ENCODE measurements at regions of chr7 and their contacts with region 1.

Region 1: GRCh38 chr7:26398756-26399501 is 107.3 kb downstream of the SNX10 start:
- DNase-seq: peak; percentile 53
- ATAC-seq: peak; percentile 79
- H3K4me3 ChIP-seq: peak overlapping the region; percentile 75
- H3K27ac ChIP-seq: peak overlapping the region; percentile 20; the same call in 1 of the 2 replicates
- H3K4me1 ChIP-seq: peaks cover 11% of the 10 kb centered on the region
- H3K27me3 ChIP-seq: no peaks in the 10 kb centered on the region
- CTCF ChIP-seq: peak; percentile 43; the same call in 1 of the 2 replicates

Region 2: DNA sequence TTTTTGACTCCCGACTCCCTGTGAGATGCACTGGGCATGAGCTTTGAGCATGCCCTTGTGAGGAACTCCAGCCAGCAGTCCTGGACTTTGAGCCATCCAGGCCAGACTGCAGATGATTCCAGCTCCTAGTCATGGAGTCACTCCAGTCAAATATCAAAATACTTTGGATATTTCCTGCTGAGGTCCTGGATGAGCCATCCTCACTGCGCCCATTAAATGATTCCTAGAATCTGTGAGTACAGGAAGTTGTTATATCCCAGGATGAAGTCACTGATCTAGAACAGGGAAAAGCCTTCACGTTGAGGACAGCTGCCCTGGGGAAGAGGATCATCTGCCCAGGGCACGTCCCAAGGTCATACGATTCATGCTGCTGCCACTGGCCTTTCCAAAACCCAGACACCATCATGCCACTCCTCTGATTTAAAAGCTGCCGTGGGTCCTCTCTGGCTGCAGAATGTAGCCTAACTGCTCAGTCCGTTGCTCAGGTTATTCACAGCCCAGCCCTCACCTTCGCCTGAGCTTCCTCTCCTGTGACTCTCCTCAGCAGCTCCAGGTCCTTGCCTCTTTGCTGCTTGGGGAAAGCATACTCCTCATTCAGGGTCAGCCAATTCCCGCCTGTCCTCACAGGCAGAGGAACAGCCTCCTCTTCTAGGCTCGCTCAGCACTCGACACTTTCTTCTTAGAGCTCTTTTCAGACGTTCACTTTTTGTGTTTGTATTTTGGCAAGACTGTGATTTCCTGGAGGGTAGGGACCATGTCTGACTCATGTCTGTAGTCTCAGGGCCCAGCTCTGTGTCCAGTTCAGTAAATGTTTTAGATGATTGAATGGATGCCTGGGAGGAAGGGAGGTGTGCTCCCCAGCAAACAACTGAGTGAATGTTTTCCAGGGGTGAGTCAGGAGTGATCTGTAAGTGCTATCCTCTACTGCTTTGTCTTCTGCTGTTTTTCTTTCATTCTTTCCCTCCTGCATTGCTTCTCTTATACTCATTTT is 50.5 kb after region 1 on chr7:
- CTCF ChIA-PET with region 1: no interaction called
- POLR2A ChIA-PET with region 1: no interaction called
- intact Hi-C with region 1: loop called (anchors 2 kb)
- DNase-seq: peak; percentile 81
- ATAC-seq: peak; percentile 96
- H3K4me3 ChIP-seq: peak overlapping the region; percentile 40
- H3K27ac ChIP-seq: peak overlapping the region; percentile 72
- H3K4me1 ChIP-seq: peaks cover 33% of the 10 kb centered on the region
- H3K27me3 ChIP-seq: no peaks in the 10 kb centered on the region
- CTCF ChIP-seq: no peak

Region 3: GRCh38 chr7:26500749-26501352 is 101.9 kb after region 1 on chr7:
- CTCF ChIA-PET with region 1: no interaction called
- POLR2A ChIA-PET with region 1: no interaction called
- intact Hi-C with region 1: loop called (anchors 1 kb)
- DNase-seq: peak; percentile 58
- ATAC-seq: peak; percentile 71
- H3K4me3 ChIP-seq: no peak overlapping the region
- H3K27ac ChIP-seq: no peak overlapping the region
- H3K4me1 ChIP-seq: no peaks in the 10 kb centered on the region
- H3K27me3 ChIP-seq: no peaks in the 10 kb centered on the region
- CTCF ChIP-seq: peak; percentile 79

Region 4: DNA sequence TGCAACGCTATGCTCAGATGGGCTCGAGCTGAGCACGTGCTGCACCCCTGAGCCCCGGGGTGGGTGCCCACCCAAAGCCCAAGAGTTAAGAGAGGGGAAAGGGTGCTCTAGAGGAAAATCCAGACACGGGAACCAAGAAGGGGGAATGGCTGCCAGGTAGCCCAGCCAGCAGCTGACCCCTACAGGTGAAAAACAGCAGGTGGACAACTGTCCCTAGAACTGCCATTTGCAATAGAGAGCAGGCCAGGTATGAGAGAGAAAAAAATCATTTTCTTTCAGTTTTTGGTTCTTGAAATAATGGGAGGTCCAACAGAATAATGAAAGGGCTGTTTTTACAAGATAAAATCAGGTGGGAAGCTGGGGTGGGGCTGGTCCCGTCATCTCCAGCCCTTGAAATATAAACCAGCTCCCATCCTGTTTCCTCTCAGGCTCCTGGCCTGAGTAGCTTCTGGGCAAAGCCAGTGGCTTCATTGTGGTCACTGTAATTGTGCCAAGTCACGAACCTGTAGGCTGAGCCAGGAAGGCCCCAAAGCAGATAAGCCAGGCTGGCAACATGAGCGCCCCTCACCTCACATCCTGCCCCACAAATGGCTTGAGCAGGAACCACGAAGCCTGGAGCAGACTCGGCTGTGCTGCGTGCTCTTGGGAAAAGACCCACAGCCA is 150.5 kb after region 1 on chr7:
- CTCF ChIA-PET with region 1: interaction called, 3 read pairs
- POLR2A ChIA-PET with region 1: interaction called, 4 read pairs
- intact Hi-C with region 1: loop called (anchors 2 kb)
- DNase-seq: peak; percentile 98
- ATAC-seq: peak; percentile 89
- H3K4me3 ChIP-seq: peak overlapping the region; percentile 35
- H3K27ac ChIP-seq: peak overlapping the region; percentile 100
- H3K4me1 ChIP-seq: peaks cover 52% of the 10 kb centered on the region
- H3K27me3 ChIP-seq: no peaks in the 10 kb centered on the region
- CTCF ChIP-seq: peak; percentile 39; the same call in 1 of the 2 replicates

Region 5: DNA sequence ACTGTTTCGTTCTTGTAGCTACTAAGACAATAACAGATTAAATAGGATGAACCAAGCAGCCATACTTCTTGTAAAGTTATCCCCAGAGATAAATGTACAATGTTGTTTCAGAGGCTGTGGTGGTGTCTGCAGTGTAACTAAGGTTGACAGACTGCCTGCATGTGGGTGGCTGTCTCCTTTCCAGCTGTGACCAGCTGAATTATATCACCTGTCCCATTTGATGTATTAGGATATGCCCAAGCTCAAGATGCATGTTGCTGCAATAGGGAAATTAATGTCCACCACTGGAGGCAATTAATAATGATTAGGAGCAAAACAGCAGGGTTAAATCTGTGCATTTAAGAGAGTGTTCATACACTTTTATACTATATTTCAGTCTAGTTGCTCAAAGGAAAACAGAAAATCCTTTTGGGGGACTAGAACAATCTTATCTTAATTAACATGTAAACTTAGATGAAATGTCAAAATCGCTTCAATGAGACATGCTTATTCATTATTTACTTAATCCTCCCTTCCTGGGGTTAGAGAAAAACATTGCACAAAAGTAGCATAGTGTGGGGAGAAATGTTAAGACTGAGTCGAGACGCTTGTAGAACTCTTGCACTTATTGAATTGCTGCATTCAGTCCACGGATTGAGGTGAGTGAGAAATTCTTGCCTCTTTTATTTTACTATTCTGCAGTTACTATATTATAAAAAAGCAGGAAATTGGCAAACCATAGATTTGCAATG is 161.8 kb after region 1 on chr7:
- CTCF ChIA-PET with region 1: no interaction called
- POLR2A ChIA-PET with region 1: no interaction called
- intact Hi-C with region 1: no loop called
- DNase-seq: peak; percentile 71
- ATAC-seq: peak; percentile 94
- H3K4me3 ChIP-seq: peak overlapping the region; percentile 48
- H3K27ac ChIP-seq: peak overlapping the region; percentile 73
- H3K4me1 ChIP-seq: peaks cover 24% of the 10 kb centered on the region
- H3K27me3 ChIP-seq: no peaks in the 10 kb centered on the region
- CTCF ChIP-seq: no peak

Region 6: GRCh38 chr7:26705567-26705966 is 306.6 kb after region 1 on chr7:
- CTCF ChIA-PET with region 1: no interaction called
- POLR2A ChIA-PET with region 1: no interaction called
- intact Hi-C with region 1: no loop called
- DNase-seq: peak; percentile 94
- ATAC-seq: peak; percentile 98
- H3K4me3 ChIP-seq: no peak overlapping the region
- H3K27ac ChIP-seq: peak overlapping the region; percentile 29
- H3K4me1 ChIP-seq: peaks cover 33% of the 10 kb centered on the region
- H3K27me3 ChIP-seq: no peaks in the 10 kb centered on the region
- CTCF ChIP-seq: no peak